PC-9 (cell line): ENCODE measurements at regions of chr5 and their contacts with region 1.

Region 1: GRCh38 chr5:122101636-122102285 is 23.7 kb upstream of the LOX start:
- DNase-seq: peak in 1 of 2 experiments; percentile 45
- H3K4me3 ChIP-seq: no peak overlapping the region
- H3K27ac ChIP-seq: no peak overlapping the region
- H3K4me1 ChIP-seq: peaks cover 13% of the 10 kb centered on the region
- H3K27me3 ChIP-seq: no peaks in the 10 kb centered on the region
- CTCF ChIP-seq: peak; percentile 74

Region 2: DNA sequence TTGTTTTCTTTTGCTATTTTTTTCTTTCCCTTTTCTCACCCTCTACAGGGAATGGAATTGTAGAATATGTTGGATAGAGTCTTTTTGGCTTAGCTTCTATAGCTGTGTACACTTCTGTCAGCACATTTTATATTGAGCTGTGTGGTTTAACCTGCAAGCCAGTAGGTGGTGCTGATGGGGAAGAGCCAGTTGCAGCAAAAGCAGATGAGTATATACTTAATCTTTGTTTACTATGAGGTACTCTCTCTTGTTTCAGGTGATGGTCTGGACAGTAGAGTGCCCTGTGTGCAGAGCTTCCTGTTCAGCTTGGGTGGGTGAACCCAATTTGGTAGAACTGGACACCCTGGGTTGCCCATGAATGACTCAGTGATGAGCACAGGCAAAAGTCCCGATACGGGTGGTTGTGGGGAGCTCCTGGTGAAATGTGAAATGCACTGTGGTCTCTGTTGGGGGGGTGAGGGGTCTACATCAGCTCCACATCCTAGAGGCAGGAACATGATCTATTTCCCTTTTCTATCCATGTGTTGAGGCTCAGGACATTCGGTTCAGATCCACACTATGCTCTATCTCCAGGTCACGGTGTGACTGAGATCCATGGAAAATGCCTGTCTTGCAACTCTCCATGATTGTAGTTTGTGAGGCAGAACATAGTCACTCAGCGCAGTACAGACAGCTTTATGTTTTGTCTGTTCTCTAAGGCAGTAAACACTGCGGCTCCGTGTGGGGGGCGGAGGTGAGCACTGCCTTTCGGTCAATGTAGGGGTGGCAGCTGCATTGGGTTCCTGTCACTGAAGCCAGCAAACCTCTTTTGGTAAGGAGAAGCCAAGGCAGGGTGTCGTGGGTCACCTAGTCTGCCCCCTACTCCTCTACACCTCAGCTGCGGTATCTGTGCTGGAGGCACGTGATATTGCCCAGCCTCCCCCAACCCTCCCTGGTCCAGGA is 1284.4 kb before region 1 on chr5:
- CTCF ChIA-PET with region 1: no interaction called
- POLR2A ChIA-PET with region 1: no interaction called
- intact Hi-C with region 1: loop called (anchors 10 kb)
- DNase-seq: no peak
- H3K4me3 ChIP-seq: no peak overlapping the region
- H3K27ac ChIP-seq: no peak overlapping the region
- H3K4me1 ChIP-seq: no peaks in the 10 kb centered on the region
- H3K27me3 ChIP-seq: no peaks in the 10 kb centered on the region
- CTCF ChIP-seq: peak; percentile 67

Region 3: GRCh38 chr5:121968910-121969607 is 132.7 kb before region 1 on chr5:
- CTCF ChIA-PET with region 1: interaction called, 8 read pairs
- POLR2A ChIA-PET with region 1: interaction called, 12 read pairs
- intact Hi-C with region 1: loop called (anchors 1 kb)
- DNase-seq: peak; percentile 48 to 95
- H3K4me3 ChIP-seq: peak overlapping the region; percentile 32; the same call in 1 of the 2 replicates
- H3K27ac ChIP-seq: peak overlapping the region; percentile 78
- H3K4me1 ChIP-seq: peaks cover 33% of the 10 kb centered on the region
- H3K27me3 ChIP-seq: no peaks in the 10 kb centered on the region
- CTCF ChIP-seq: no peak